ENCODE measurements at regions of chr5 and their contacts with region 1.

Region 1: DNA sequence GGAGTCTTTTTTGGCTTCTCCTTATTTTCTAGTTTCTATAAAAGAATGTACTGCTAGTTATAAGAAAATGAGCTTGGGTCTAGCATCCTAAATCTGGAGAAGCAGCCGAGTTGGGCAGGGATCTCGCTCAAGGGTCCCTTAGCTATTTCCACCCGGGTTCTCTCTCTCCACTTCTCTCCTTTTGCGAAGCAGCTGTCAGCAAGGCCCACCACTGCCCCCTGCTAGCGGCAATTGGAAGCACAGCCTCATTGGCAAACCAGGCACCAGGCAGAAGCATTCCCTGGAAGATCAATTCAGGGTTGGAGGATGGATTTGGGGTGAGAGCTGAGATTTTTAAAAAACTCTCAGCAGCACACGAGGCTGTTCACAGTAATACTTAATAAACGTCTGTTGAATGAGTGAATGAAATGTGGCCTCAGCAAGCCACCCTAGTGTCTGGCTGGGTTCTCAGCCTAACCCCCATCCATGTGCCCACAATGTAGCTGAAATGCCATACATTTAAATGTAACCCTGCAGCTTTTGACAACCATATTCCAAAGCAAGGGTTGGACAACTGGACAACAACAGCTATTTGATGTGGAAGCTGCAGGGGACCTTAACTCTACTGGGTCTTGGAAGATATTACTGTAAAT is 34.6 kb upstream of the TNIP1 start:
- DNase-seq: peak; percentile 75
- H3K4me3 ChIP-seq: no peak overlapping the region
- H3K27ac ChIP-seq: no peak overlapping the region
- H3K4me1 ChIP-seq: no peaks in the 10 kb centered on the region
- H3K27me3 ChIP-seq: no peaks in the 10 kb centered on the region

Region 2: GRCh38 chr5:151051066-151051930 is 64.1 kb before region 1 on chr5:
- in situ Hi-C with region 1: loop called (anchors 5 kb)
- DNase-seq: peak; percentile 81
- H3K4me3 ChIP-seq: no peak overlapping the region
- H3K27ac ChIP-seq: no peak overlapping the region
- H3K4me1 ChIP-seq: no peaks in the 10 kb centered on the region
- H3K27me3 ChIP-seq: no peaks in the 10 kb centered on the region

Measured in GM23248 (cell line).